AG04450 (cell line): ENCODE measurements at regions of chr11 and their contacts with region 1.

Region 1: DNA sequence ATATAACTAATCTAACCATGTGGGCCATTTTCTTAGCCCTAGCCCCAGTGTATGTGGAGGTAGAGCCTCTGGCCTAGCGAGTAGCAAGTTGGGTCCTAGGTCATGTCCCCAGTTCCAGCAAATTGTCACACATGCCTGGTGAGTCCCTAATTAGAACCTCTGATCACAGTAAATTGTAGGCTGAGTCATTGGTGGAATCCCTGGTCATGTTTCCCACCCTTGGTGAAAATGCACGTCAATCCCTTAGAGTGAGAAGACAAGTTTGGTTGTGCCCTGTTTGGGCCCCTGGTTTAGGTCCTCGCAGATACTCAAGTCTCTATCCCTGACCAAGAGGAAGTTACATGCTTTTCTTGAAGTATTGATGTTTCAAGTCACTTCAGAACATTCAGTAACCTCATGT is 46.7 kb downstream of the ATM start:
- DNase-seq: no peak
- H3K4me3 ChIP-seq: no peak overlapping the region
- H3K27ac ChIP-seq: no peak overlapping the region
- H3K27me3 ChIP-seq: no peaks in the 10 kb centered on the region
- CTCF ChIP-seq: no peak

Region 2: DNA sequence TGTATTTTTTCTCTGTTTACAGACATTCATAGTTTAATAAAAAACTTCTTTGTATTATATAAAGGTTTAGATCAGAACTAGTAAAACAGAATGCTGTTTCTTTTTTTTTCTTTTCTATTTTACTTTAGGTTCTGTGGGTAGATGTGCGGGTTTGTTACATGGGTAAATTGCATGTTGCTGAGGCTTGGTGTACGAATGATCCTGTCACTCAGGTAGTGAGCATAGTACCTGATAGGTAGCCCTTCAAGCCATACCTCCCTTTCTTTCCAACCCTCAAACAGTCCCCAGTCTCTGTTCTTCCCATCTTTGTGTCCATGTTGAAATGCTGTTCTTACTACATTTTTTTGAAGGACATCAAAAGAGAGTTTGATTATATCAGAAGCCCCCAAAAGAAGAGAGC is 43.5 kb before region 1 on chr11:
- CTCF ChIA-PET with region 1: no interaction called
- POLR2A ChIA-PET with region 1: interaction called, 10 read pairs
- DNase-seq: no peak
- H3K4me3 ChIP-seq: no peak overlapping the region
- H3K27ac ChIP-seq: no peak overlapping the region
- H3K27me3 ChIP-seq: no peaks in the 10 kb centered on the region
- CTCF ChIP-seq: no peak